ENCODE measurements at regions of chr10 and their contacts with region 1.

Region 1: DNA sequence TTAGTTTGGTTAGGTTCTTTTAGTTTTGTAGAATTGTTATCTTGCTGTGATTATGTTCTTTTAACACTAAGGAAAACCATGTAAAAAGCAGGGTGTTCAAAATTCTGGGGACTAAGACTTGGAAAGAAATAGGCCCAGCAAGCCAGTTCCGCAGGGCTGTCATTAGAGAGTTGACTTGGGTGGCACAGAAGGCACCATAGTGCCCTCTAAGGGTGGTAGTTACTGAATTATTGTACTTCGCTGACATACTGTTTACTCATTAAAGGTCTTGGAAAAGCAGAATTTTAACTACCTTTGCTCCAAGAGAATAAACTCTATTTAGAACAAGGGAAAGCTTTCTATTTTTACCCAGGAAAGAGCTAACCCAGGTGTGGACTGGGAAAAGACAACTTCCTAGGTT is 86.5 kb downstream of the OTUD1 start:
- DNase-seq: peak; percentile 19
- H3K4me3 ChIP-seq: no peak overlapping the region
- H3K27ac ChIP-seq: no peak overlapping the region
- H3K4me1 ChIP-seq: no peaks in the 10 kb centered on the region
- H3K27me3 ChIP-seq: no peaks in the 10 kb centered on the region
- CTCF ChIP-seq: peak; percentile 42 to 54 (median 46)
- EP300 ChIP-seq: no peak
- POLR2A ChIP-seq: no peak

Region 2: GRCh38 chr10:23146258-23146657 is 379.1 kb before region 1 on chr10:
- in situ Hi-C with region 1: loop called in 2 of 4 experiments (anchors 25 kb)
- intact Hi-C with region 1: no loop called
- DNase-seq: no peak
- H3K4me3 ChIP-seq: no peak overlapping the region
- H3K27ac ChIP-seq: no peak overlapping the region
- H3K4me1 ChIP-seq: no peaks in the 10 kb centered on the region
- H3K27me3 ChIP-seq: no peaks in the 10 kb centered on the region
- CTCF ChIP-seq: no peak
- EP300 ChIP-seq: no peak
- POLR2A ChIP-seq: no peak

Region 3: GRCh38 chr10:23158370-23158769 is 367.0 kb before region 1 on chr10:
- in situ Hi-C with region 1: loop called in 1 of 4 experiments (anchors 25 kb)
- intact Hi-C with region 1: no loop called
- DNase-seq: peak; percentile 27
- H3K4me3 ChIP-seq: peak overlapping the region in 1 of 4 donors; percentile 3
- H3K27ac ChIP-seq: no peak overlapping the region
- H3K4me1 ChIP-seq: peaks cover 0 to 4% (median 0%) of the 10 kb centered on the region in 4 donors
- H3K27me3 ChIP-seq: peaks cover 10% of the 10 kb centered on the region
- CTCF ChIP-seq: peak; percentile 66 to 77 (median 72)
- EP300 ChIP-seq: no peak
- POLR2A ChIP-seq: no peak

Region 4: DNA sequence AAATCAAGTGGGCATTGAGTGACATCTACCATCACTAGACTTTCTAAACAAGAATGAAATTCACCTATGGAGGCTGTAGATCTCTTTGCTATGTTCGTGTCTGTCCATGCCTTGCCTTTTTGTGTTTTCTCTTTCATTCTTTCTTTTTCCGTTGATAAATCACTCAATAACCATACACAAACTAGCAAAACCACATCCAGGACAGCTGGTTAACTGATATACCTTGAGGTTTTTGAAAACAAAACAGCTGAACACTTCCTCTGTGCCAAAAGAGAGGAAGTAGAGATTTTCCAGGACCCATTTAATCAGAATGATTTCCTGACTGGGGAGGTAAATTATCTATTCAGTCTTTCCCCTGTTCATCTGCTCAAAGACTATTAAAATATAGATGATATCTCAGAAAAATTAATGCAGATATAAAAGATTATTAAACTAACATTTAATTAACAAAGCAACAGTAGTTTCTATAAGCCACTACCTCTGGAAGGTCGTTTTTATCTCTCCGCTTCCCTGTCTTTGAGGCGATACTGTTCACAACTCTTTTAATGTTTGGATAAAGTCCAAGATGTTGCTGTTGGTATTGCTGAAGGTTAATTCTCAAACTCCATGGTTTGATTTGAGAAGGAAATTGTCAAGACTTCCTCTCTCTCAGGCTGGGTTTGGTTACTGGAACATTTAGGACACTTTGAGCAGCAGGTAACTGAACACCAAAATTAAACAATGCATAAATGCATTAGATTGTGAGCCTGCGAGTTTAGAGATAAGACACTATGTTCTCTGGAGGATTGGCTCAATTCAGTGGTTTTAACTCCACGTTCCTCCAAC is 156.4 kb before region 1 on chr10:
- in situ Hi-C with region 1: no loop called
- intact Hi-C with region 1: no loop called
- DNase-seq: no peak
- H3K4me3 ChIP-seq: no peak overlapping the region
- H3K27ac ChIP-seq: no peak overlapping the region
- H3K4me1 ChIP-seq: no peaks in the 10 kb centered on the region
- H3K27me3 ChIP-seq: no peaks in the 10 kb centered on the region
- CTCF ChIP-seq: no peak
- EP300 ChIP-seq: no peak
- POLR2A ChIP-seq: no peak